Mammary epithelial cell (primary cell): ENCODE measurements at regions of chr2 and their contacts with region 1.

Region 1: DNA sequence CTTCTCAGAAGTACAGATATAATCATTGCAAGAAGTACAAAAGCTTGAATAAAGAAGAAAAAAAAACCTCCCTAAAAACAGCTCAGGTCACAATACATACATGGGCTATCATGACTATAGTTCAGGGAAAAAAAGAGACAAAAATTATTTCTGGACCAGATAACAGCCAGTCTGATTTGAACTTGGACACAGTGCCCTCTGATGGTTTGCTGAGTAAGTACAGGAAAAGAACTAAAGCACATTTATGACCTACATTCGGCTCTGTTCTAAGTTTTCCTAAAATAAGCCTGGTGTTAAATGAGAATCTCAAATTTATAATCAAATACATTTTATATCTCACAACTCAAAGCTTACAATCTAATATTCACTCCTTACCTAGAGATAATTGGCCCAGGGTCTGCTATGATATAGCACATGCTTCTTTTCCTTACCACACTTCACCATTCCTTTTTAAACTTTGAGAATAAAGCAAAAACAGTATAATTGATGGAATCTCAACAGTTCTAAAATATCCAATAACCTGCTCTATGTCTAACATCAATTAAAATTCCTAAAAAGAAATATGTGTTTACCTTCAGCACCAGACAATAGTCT is 81.1 kb downstream of the RAPH1 start:
- DNase-seq: peak; percentile 21
- H3K4me3 ChIP-seq: no peak overlapping the region
- H3K27ac ChIP-seq: no peak overlapping the region
- H3K4me1 ChIP-seq: peaks cover 5% of the 10 kb centered on the region
- H3K27me3 ChIP-seq: no peaks in the 10 kb centered on the region
- CTCF ChIP-seq: peak; percentile 72 to 76

Region 2: GRCh38 chr2:202577250-202578183 is 876.4 kb before region 1 on chr2:
- CTCF ChIA-PET with region 1: no interaction called
- dilution Hi-C with region 1: no loop called
- in situ Hi-C with region 1: no loop called
- intact Hi-C with region 1: loop called (anchors 1 kb)
- DNase-seq: no peak
- H3K4me3 ChIP-seq: no peak overlapping the region
- H3K27ac ChIP-seq: no peak overlapping the region
- H3K4me1 ChIP-seq: no peaks in the 10 kb centered on the region
- H3K27me3 ChIP-seq: no peaks in the 10 kb centered on the region
- CTCF ChIP-seq: no peak

Region 3: DNA sequence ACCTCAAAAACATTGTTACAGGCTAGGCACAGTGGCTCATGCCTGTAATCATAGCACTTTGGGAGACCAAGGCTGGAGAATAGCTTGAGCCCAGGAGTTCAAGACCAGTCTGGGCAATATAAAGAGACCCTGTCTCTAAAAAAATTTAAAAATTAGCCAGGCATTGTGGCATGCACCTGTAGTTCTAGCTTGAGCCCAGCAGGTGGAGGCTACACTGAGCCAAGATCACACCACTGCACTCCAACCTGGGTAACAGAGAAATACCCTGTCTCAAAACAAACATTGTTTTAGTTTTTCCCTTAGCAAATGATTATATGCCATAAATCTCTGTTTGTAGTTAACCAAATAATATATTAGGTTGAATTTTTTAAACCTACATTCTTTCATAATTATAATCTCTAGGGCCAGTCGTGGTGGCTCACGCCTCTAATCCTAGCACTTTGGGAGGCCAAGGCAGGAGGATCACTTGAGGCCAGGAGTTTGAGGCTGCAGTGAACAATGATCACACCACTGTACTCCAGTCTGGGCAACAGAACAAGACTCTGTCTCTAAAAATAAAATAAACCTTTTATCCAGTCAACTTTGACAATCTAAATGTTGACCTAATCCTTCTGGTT is 228.4 kb before region 1 on chr2:
- CTCF ChIA-PET with region 1: no interaction called
- dilution Hi-C with region 1: no loop called
- in situ Hi-C with region 1: no loop called
- intact Hi-C with region 1: loop called (anchors 1 kb)
- DNase-seq: peak; percentile 5
- H3K4me3 ChIP-seq: no peak overlapping the region
- H3K27ac ChIP-seq: no peak overlapping the region
- H3K4me1 ChIP-seq: no peaks in the 10 kb centered on the region
- H3K27me3 ChIP-seq: no peaks in the 10 kb centered on the region
- CTCF ChIP-seq: peak; percentile 62 to 72

Region 4: GRCh38 chr2:203279305-203279704 is 174.7 kb before region 1 on chr2:
- CTCF ChIA-PET with region 1: no interaction called
- dilution Hi-C with region 1: no loop called
- in situ Hi-C with region 1: no loop called
- intact Hi-C with region 1: loop called (anchors 5 kb)
- DNase-seq: peak; percentile 25
- H3K4me3 ChIP-seq: no peak overlapping the region
- H3K27ac ChIP-seq: no peak overlapping the region
- H3K4me1 ChIP-seq: no peaks in the 10 kb centered on the region
- H3K27me3 ChIP-seq: no peaks in the 10 kb centered on the region
- CTCF ChIP-seq: no peak

Region 5: DNA sequence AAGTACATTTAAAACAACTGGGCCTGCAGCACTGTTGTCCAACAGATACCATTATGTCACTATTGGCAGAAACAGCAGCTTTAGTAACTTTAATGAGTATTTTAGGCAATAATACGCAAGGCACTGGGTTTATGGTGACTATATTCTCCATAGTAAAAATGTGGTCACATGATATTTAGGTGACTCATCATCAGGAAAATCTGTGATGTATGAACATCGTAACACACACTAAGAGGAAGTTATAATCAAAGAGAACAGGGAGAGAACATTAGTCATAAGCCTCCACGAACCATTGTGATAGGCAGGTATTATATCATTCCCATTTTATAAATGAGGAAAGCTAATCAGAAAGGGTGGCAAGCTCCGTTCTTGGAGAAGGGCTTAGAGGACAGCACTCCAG is 44.2 kb after region 1 on chr2:
- CTCF ChIA-PET with region 1: no interaction called
- dilution Hi-C with region 1: no loop called
- in situ Hi-C with region 1: no loop called
- intact Hi-C with region 1: no loop called
- DNase-seq: peak; percentile 77
- H3K4me3 ChIP-seq: no peak overlapping the region
- H3K27ac ChIP-seq: peak overlapping the region; percentile 71
- H3K4me1 ChIP-seq: peaks cover 13% of the 10 kb centered on the region
- H3K27me3 ChIP-seq: no peaks in the 10 kb centered on the region
- CTCF ChIP-seq: no peak